ENCODE measurements at regions of chr15 and their contacts with region 1.

Region 1: GRCh38 chr15:56245871-56246814 is 2.5 kb upstream of the RFX7 start:
- DNase-seq: peak; percentile 93
- H3K4me3 Mint-ChIP-seq: peak overlapping the region; percentile 91
- H3K27ac Mint-ChIP-seq: peak overlapping the region; percentile 93
- H3K4me1 Mint-ChIP-seq: peaks cover 21% of the 10 kb centered on the region
- H3K27me3 Mint-ChIP-seq: peaks cover 3% of the 10 kb centered on the region

Region 2: GRCh38 chr15:55654561-55655031 is 591.5 kb before region 1 on chr15:
- CTCF ChIA-PET with region 1: no interaction called
- POLR2A ChIA-PET with region 1: no interaction called
- intact Hi-C with region 1: loop called (anchors 5 kb)
- DNase-seq: no peak
- H3K4me3 Mint-ChIP-seq: no peak overlapping the region
- H3K27ac Mint-ChIP-seq: no peak overlapping the region
- H3K4me1 Mint-ChIP-seq: no peaks in the 10 kb centered on the region
- H3K27me3 Mint-ChIP-seq: no peaks in the 10 kb centered on the region

Region 3: DNA sequence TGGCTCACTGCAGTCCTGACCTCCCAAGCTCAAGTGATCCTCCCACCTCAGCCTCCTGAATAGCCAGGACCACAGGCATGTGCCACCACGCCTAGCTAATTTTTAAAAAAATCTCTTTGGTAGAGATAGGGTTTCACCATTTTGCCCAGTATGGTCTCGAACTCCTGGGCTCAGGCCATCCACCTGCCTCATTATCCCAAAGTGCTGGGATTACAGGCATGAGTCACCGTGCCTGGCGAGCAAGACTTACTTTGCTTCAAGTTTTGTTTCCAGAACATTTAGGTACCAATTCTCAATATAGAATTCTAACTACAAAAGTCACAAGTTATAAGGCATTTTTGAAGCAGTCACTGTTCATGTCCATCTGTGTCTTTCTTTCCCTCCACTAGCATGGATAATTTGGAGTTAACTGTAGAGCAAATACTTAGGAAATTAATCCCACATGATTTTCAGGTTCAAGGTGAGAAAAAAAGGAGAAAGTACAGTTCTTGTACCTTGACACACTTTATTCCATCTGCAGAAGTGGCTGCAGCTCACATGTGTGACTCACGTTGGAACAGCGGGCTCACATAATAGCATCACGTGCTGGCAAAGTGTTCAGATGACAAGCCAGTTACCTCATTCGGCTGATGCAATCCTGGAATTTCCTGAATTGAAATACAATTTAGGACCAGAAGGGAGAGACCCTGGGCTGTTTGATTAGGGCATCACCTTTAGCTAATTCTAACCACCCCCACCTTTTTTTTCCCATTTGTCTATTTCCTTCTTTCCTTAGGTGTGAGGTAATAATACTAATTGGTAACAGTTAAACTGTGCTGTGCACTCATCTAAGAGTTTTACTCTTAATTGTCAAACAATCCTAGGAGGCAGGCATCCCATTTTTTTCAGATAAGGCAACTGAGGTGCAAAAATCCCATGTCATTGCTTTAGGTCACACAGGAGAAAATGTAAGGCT is 205.8 kb before region 1 on chr15:
- CTCF ChIA-PET with region 1: no interaction called
- POLR2A ChIA-PET with region 1: no interaction called
- intact Hi-C with region 1: loop called (anchors 1 kb)
- DNase-seq: peak; percentile 44
- H3K4me3 Mint-ChIP-seq: no peak overlapping the region
- H3K27ac Mint-ChIP-seq: peak overlapping the region; percentile 64
- H3K4me1 Mint-ChIP-seq: peaks cover 55% of the 10 kb centered on the region
- H3K27me3 Mint-ChIP-seq: no peaks in the 10 kb centered on the region

Region 4: GRCh38 chr15:56207092-56207491 is 39.1 kb before region 1 on chr15:
- CTCF ChIA-PET with region 1: interaction called, 5 read pairs
- POLR2A ChIA-PET with region 1: no interaction called
- intact Hi-C with region 1: loop called (anchors 2 kb)
- DNase-seq: no peak
- H3K4me3 Mint-ChIP-seq: no peak overlapping the region
- H3K27ac Mint-ChIP-seq: no peak overlapping the region
- H3K4me1 Mint-ChIP-seq: peaks cover 71% of the 10 kb centered on the region
- H3K27me3 Mint-ChIP-seq: no peaks in the 10 kb centered on the region

Region 5: DNA sequence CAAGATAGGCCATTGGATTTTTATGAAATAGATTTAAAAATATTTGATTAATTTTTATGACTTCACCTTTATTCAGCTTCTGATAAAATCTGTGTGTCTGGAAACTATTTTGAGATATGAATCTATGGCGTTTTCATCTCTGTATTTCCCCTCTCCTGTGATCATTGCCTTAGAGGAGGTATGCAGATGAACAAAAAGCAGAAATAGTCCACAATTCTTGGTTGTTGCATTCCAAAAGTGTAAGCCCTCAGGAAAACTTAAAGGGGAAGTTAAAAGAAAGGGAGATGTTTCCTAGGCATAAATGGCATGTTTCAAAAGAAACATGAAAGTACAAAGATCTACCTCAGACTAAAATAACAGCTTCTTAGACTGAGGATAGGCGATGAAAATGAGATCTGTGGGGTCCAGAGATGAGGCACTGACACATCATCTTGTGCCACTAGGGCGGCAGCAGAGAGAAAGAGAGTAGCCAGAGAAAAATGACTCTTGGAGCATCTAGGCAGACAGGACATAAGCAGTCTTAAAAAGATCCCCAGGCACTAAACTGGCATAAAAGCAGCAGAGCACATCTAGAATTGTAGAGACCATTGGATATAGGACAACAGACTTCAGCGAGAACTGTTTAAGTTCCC is 40.0 kb after region 1 on chr15:
- CTCF ChIA-PET with region 1: no interaction called
- POLR2A ChIA-PET with region 1: no interaction called
- intact Hi-C with region 1: no loop called
- DNase-seq: no peak
- H3K4me3 Mint-ChIP-seq: no peak overlapping the region
- H3K27ac Mint-ChIP-seq: no peak overlapping the region
- H3K4me1 Mint-ChIP-seq: no peaks in the 10 kb centered on the region
- H3K27me3 Mint-ChIP-seq: no peaks in the 10 kb centered on the region

Region 6: DNA sequence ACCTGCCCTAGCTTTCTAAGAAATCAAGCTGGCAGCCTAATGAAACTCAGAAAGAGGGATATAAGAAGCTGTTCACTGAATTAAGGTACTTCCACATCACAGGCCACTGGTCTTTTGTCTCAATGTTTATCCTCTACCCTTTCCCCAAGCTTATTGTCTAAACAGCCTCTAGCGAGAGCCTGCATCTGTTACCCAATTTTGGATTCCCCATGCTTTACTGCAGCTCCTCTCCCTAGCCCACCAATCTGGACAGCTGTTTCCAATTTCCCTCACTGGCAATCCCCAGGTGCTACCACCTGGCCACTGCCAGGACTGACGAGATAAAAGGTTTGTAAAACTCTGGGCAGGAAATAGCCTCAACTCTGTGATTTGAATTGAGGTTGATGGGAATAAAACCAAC is 61.0 kb after region 1 on chr15:
- CTCF ChIA-PET with region 1: no interaction called
- POLR2A ChIA-PET with region 1: no interaction called
- intact Hi-C with region 1: no loop called
- DNase-seq: no peak
- H3K4me3 Mint-ChIP-seq: no peak overlapping the region
- H3K27ac Mint-ChIP-seq: no peak overlapping the region
- H3K4me1 Mint-ChIP-seq: no peaks in the 10 kb centered on the region
- H3K27me3 Mint-ChIP-seq: no peaks in the 10 kb centered on the region

Region 7: DNA sequence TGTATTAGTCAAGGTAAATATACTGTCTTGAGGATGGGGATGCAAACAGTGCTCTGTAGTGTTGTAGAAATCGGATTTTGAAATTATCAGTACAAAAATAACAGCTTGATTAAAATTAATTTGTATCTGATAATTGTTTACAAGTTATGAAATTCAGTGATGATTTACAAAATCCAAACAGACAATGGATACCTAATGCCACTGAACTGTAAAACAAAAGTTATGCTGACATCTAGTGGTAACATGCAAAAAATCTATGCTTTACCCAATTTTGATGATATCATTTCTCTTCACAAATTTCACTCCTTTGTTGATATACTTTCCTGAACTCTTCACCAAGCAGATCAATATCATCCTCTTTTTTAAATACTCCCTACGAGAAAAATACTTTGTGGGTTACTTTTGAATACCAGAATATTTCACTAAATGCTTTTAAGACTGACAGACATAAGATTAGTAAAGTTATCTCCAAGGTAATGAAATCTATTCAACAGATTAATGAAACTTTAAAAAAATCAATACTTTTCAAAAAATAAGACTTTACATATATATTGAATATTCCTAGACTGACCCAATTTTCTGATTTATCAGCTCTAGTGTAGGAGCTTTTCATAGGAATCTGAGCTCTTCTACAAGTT is 182.8 kb after region 1 on chr15:
- CTCF ChIA-PET with region 1: interaction called, 17 read pairs
- POLR2A ChIA-PET with region 1: interaction called, 4 read pairs
- intact Hi-C with region 1: loop called (anchors 1 kb)
- DNase-seq: no peak
- H3K4me3 Mint-ChIP-seq: no peak overlapping the region
- H3K27ac Mint-ChIP-seq: no peak overlapping the region
- H3K4me1 Mint-ChIP-seq: no peaks in the 10 kb centered on the region
- H3K27me3 Mint-ChIP-seq: peaks cover 4% of the 10 kb centered on the region

Region 8: GRCh38 chr15:56732921-56733797 is 487.0 kb after region 1 on chr15 and contains the start of gene ZNF280D:
- CTCF ChIA-PET with region 1: no interaction called
- POLR2A ChIA-PET with region 1: interaction called, 4 read pairs
- intact Hi-C with region 1: loop called (anchors 10 kb)
- DNase-seq: peak; percentile 85
- H3K4me3 Mint-ChIP-seq: peak within 1 kb of the TSS; percentile 93
- H3K27ac Mint-ChIP-seq: peak within 1 kb of the TSS; percentile 93
- H3K4me1 Mint-ChIP-seq: peaks cover 32% of the 10 kb centered on the region
- H3K27me3 Mint-ChIP-seq: no peaks in the 10 kb centered on the region
- total RNA-seq, gene ZNF280D: 18.0 to 19.3 TPM

Region 9: DNA sequence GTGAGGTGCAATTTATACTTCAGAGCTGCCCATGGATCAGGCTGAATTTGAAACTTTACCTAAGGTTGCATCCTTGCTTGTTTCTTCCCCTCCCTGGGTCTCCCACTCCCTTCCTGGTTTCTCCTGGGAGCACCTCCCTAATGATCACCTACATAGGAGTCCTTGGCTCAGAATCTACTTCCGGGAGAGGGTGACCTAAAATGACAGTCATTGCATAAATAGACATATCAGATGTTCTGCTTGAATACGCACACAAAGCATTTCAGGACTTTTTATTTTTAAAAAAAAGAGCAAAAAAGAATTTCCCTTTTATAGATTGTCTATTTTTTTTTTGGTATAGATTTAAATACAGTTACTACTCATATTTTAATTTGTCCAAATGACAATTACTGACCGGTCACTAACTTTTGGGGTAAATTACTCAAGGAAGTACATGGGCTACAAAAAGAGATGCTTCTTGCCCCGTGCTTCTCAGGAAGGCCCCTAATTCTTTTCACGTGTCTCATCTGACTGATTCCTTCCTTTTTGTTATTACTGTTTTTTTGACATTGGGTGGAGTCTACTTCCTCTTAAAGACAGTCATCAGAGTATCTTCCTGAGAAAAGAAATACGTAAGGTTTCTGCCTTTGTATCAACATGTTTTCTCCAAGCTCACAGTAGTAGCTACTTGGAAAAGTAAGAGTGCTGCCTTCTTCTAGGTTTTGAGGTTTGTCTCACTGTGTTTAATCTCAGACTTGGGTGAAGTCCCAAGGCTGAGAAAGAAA is 1340.7 kb after region 1 on chr15:
- CTCF ChIA-PET with region 1: no interaction called
- POLR2A ChIA-PET with region 1: no interaction called
- intact Hi-C with region 1: loop called (anchors 10 kb)
- DNase-seq: no peak
- H3K4me3 Mint-ChIP-seq: no peak overlapping the region
- H3K27ac Mint-ChIP-seq: peak overlapping the region; percentile 26
- H3K4me1 Mint-ChIP-seq: peaks cover 31% of the 10 kb centered on the region
- H3K27me3 Mint-ChIP-seq: peaks cover 16% of the 10 kb centered on the region

Measured in activated CD4-positive, alpha-beta memory T cell treated with anti-CD3 and anti-CD28 coated beads for 36 hours (primary cell).